ENCODE measurements at regions of chr1 and their contacts with region 1.

Region 1: DNA sequence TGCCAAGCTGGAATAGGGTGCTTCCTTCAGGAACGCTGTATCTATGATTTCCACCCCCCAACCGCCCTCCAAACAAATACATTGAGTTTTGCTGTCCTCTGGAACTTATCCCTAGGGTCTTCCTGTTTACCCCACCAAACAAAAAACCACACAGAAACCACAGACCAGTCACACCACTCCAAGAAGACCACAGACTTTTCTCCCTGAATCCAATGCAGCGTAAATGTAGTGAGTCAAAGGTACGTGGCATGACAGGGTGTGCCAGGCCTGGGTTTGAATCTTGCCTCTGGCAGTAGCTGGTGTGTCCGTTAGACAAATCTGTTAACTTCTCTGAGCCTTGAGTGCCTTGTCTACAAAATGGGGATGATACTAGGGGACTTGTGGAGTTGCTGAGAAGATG is 27.8 kb downstream of the ASAP3 start:
- DNase-seq: no peak
- ATAC-seq: no peak
- H3K4me3 Mint-ChIP-seq: no peak overlapping the region
- H3K27ac Mint-ChIP-seq: no peak overlapping the region
- H3K4me1 Mint-ChIP-seq: no peaks in the 10 kb centered on the region
- H3K27me3 Mint-ChIP-seq: peaks cover 8% of the 10 kb centered on the region
- CTCF ChIP-seq: no peak

Region 2: DNA sequence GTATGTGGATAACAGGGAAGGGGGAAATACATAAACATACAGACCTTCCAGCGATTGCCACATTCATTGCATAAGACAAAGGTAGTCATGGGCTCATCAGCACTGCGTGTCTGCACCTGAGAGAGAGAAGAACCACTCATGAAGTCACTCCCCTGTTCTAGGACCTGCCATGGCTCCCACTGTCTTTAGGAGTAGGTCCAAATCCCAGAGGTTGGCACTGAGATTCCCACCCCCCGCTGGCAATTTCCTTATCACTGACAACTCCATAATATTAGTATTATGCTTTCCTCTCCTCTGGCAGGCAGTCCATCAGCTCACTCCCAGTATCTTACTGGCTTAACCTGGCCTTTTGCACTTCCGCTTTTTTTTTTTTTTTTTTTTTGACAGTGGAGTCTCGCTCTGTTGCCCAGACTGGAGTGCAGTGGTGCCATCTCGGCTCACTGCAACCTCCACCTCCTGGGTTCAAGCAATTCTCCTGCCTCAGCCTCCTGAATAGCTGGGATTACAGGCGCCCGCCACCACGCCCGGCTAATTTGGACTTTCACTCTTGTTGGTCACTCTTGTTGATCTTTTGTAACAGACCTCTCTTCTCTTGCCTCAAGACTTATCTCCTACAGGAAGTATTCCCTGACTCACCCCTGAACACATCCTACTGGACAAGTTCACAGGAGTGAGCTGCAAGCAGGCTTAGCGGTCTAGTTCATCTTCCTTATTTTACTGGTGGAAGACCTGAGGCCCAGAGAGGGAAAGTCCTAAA is 71.7 kb before region 1 on chr1:
- CTCF ChIA-PET with region 1: no interaction called
- POLR2A ChIA-PET with region 1: no interaction called
- intact Hi-C with region 1: no loop called
- DNase-seq: no peak
- ATAC-seq: no peak
- H3K4me3 Mint-ChIP-seq: no peak overlapping the region
- H3K27ac Mint-ChIP-seq: no peak overlapping the region
- H3K4me1 Mint-ChIP-seq: peaks cover 4% of the 10 kb centered on the region
- H3K27me3 Mint-ChIP-seq: peaks cover 3% of the 10 kb centered on the region
- CTCF ChIP-seq: no peak

Region 3: GRCh38 chr1:23419180-23419579 is 37.0 kb before region 1 on chr1:
- CTCF ChIA-PET with region 1: no interaction called
- POLR2A ChIA-PET with region 1: interaction called, 16 read pairs
- intact Hi-C with region 1: no loop called
- DNase-seq: no peak
- ATAC-seq: no peak
- H3K4me3 Mint-ChIP-seq: no peak overlapping the region
- H3K27ac Mint-ChIP-seq: no peak overlapping the region
- H3K4me1 Mint-ChIP-seq: peaks cover 13% of the 10 kb centered on the region
- H3K27me3 Mint-ChIP-seq: peaks cover 13% of the 10 kb centered on the region
- CTCF ChIP-seq: no peak

Measured in activated B cell treated with CpG ODN at 0.5 μM for 24 hours (primary cell).